BJ (cell line): ENCODE measurements at regions of chr9 and their contacts with region 1.

Region 1: GRCh38 chr9:4866239-4866969 is 73.7 kb downstream of the RCL1 start:
- DNase-seq: no peak
- H3K4me3 ChIP-seq: no peak overlapping the region
- H3K27me3 ChIP-seq: no peaks in the 10 kb centered on the region
- CTCF ChIP-seq: no peak

Region 2: GRCh38 chr9:4356306-4356705 is 510.1 kb before region 1 on chr9:
- CTCF ChIA-PET with region 1: no interaction called
- POLR2A ChIA-PET with region 1: no interaction called
- DNase-seq: no peak
- H3K4me3 ChIP-seq: no peak overlapping the region
- H3K27me3 ChIP-seq: peaks cover 2% of the 10 kb centered on the region
- CTCF ChIP-seq: no peak

Region 3: DNA sequence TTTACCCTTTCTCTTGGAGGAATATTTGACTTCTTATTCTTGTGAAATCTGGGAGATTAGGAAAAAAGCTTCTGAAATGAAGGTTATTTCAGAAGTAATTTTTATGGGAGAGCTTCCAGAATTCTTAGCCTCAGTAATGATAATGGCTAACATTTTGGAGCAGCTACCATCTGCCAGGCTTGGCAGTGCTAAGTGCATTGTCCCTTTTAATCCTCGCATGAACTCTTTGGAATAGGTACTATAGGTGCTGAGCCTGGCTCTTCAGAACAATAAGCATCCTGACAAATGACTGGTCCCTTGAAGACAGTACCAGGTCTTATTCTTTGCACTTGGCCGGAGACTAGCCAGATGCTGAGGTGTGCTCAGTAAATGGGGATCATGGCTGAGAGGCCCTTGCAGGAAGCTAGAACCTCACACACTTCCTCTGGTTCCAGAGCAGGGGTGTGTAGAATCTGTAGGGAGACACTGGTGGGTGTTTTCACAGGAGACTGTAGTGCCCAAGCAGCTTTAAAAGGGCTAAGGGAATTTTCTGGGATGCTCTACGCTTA is 17.0 kb after region 1 on chr9:
- CTCF ChIA-PET with region 1: interaction called, 3 read pairs
- POLR2A ChIA-PET with region 1: interaction called, 11 read pairs
- DNase-seq: no peak
- H3K4me3 ChIP-seq: no peak overlapping the region
- H3K27me3 ChIP-seq: no peaks in the 10 kb centered on the region
- CTCF ChIP-seq: no peak